ENCODE measurements at regions of chr15 and their contacts with region 1.

Region 1: GRCh38 chr15:89206908-89207331 is 14.5 kb downstream of the RLBP1 start:
- DNase-seq: peak; percentile 44 to 50
- ATAC-seq: peak; percentile 50 to 75
- H3K4me3 ChIP-seq: peak overlapping the region in 2 of 4 donors; percentile 5 to 22
- H3K27ac ChIP-seq: no peak overlapping the region
- H3K4me1 ChIP-seq: peaks cover 0 to 3% of the 10 kb centered on the region in 2 donors
- H3K27me3 ChIP-seq: no peaks in the 10 kb centered on the region
- CTCF ChIP-seq: peak; percentile 89 to 96 (median 94)
- POLR2A ChIP-seq: no peak

Region 2: GRCh38 chr15:89112341-89112971 is 94.5 kb before region 1 on chr15:
- in situ Hi-C with region 1: no loop called
- intact Hi-C with region 1: no loop called
- DNase-seq: peak in 1 of 2 donors; percentile 47
- ATAC-seq: peak; percentile 47 to 70
- H3K4me3 ChIP-seq: no peak overlapping the region
- H3K27ac ChIP-seq: peak overlapping the region; percentile 69 to 99 (median 77)
- H3K4me1 ChIP-seq: peaks cover 29 to 77% of the 10 kb centered on the region in 2 donors
- H3K27me3 ChIP-seq: no peaks in the 10 kb centered on the region
- CTCF ChIP-seq: no peak
- POLR2A ChIP-seq: no peak

Region 3: GRCh38 chr15:89243691-89244471 is 37.0 kb after region 1 on chr15 and contains the start of gene FANCI:
- in situ Hi-C with region 1: no loop called
- intact Hi-C with region 1: loop called (anchors 1 kb)
- DNase-seq: peak; percentile 89 to 93
- ATAC-seq: peak; percentile 96 to 97
- H3K4me3 ChIP-seq: peak within 1 kb of the TSS; percentile 75 to 88 (median 76)
- H3K27ac ChIP-seq: peak within 1 kb of the TSS; percentile 66 to 82 (median 72)
- H3K4me1 ChIP-seq: peaks cover 8 to 15% of the 10 kb centered on the region in 2 donors
- H3K27me3 ChIP-seq: no peaks in the 10 kb centered on the region
- CTCF ChIP-seq: peak; percentile 12 to 55 (median 34)
- POLR2A ChIP-seq: peak in 1 of 2 donors; percentile 27
- total RNA-seq, gene FANCI: 0.80 to 3.3 (median 2.7) TPM

Region 4: DNA sequence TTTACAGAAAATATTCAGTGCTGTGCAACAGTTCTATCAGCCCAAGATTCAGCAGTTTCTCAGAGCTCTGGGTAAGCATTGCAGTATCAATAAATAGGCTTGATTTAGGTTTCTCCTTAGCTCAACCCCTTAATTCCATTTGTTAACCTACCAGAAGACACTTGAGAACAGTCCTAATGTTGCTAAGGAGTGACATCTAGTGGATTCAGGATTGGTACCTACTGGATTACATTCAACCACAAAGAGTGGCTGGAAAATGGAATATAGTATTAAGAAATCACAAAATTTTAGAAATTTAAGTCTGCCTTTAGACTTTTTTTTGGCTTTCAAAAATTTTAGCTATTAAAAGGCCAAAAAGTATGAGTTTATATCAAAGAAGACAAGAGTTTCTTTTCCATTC is 93.0 kb after region 1 on chr15:
- in situ Hi-C with region 1: no loop called
- intact Hi-C with region 1: loop called (anchors 2 kb)
- DNase-seq: no peak
- ATAC-seq: no peak
- H3K4me3 ChIP-seq: no peak overlapping the region
- H3K27ac ChIP-seq: no peak overlapping the region
- H3K4me1 ChIP-seq: no peaks in the 10 kb centered on the region
- H3K27me3 ChIP-seq: no peaks in the 10 kb centered on the region
- CTCF ChIP-seq: no peak
- POLR2A ChIP-seq: no peak

Region 5: GRCh38 chr15:89430530-89431341 is 223.8 kb after region 1 on chr15:
- in situ Hi-C with region 1: loop called in 1 of 4 experiments (anchors 25 kb)
- intact Hi-C with region 1: loop called (anchors 2 kb)
- DNase-seq: peak; percentile 57 to 71
- ATAC-seq: peak; percentile 96 to 97
- H3K4me3 ChIP-seq: peak overlapping the region; percentile 48 to 72 (median 56)
- H3K27ac ChIP-seq: no peak overlapping the region
- H3K4me1 ChIP-seq: peaks cover 0 to 5% of the 10 kb centered on the region in 2 donors
- H3K27me3 ChIP-seq: no peaks in the 10 kb centered on the region
- CTCF ChIP-seq: peak; percentile 90 to 99 (median 96)
- POLR2A ChIP-seq: no peak

Region 6: GRCh38 chr15:89472785-89473256 is 265.9 kb after region 1 on chr15:
- in situ Hi-C with region 1: no loop called
- intact Hi-C with region 1: no loop called
- DNase-seq: no peak
- ATAC-seq: no peak
- H3K4me3 ChIP-seq: no peak overlapping the region
- H3K27ac ChIP-seq: no peak overlapping the region
- H3K4me1 ChIP-seq: no peaks in the 10 kb centered on the region
- H3K27me3 ChIP-seq: peaks cover 20 to 32% (median 27%) of the 10 kb centered on the region in 3 donors
- CTCF ChIP-seq: peak in 4 of 5 experiments; percentile 18 to 44 (median 26)
- POLR2A ChIP-seq: no peak